ENCODE measurements at regions of chr10 and their contacts with region 1.

Region 1: DNA sequence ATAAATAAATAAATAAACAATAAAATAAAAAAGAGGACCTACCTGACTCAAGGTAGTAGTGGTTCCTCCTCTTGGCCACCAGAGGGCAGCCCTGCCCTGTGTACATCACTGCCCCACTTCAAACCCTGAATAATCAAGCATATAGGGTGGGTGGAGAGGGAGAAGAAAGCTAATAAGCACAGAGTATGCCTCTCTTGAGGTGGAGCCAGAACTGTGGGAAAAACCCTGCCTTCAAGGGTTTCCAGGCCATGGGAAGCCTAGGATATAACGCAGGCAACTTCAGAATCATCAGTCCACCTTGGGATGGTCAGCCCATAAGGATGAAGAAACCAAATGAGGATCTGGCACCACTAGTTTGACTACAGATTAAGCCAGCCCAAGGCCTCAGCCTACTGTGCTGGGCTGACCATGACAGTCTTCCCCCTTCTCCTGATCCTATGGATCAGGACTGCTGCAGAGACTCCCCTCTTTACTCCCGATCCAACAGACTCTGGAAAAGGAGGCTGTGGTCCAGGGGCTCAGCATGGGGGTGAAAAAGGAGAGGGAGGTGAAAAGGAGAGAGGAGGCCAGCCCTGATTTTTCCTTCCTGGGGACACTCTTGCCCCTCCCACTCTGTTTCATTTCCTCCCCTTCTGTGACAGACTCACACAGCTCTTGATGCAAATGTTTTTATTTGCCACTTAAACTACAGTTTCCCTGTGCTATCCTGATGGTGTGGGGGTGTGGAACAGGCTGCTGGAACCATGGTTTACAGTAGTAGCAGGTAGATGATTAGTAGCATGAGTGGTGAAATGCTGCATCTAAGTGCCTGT is 10.1 kb downstream of the AVPI1 start:
- H3K4me3 ChIP-seq: no peak overlapping the region
- H3K27ac ChIP-seq: no peak overlapping the region
- H3K4me1 ChIP-seq: no peaks in the 10 kb centered on the region
- CTCF ChIP-seq: peak; percentile 58; the same call in 1 of the 2 replicates

Region 2: GRCh38 chr10:97497572-97498075 is 179.4 kb before region 1 on chr10:
- CTCF ChIA-PET with region 1: no interaction called
- POLR2A ChIA-PET with region 1: no interaction called
- H3K4me3 ChIP-seq: peak overlapping the region; percentile 88
- H3K27ac ChIP-seq: peak overlapping the region; percentile 89
- H3K4me1 ChIP-seq: peaks cover 16% of the 10 kb centered on the region
- CTCF ChIP-seq: no peak

Region 3: GRCh38 chr10:97596101-97597062 is 80.6 kb before region 1 on chr10:
- CTCF ChIA-PET with region 1: no interaction called
- POLR2A ChIA-PET with region 1: no interaction called
- H3K4me3 ChIP-seq: no peak overlapping the region
- H3K27ac ChIP-seq: no peak overlapping the region
- H3K4me1 ChIP-seq: no peaks in the 10 kb centered on the region
- CTCF ChIP-seq: no peak

Region 4: GRCh38 chr10:97640174-97640867 is 36.7 kb before region 1 on chr10 and contains the start of gene PI4K2A:
- CTCF ChIA-PET with region 1: interaction called, 10 read pairs
- POLR2A ChIA-PET with region 1: no interaction called
- H3K4me3 ChIP-seq: peak within 1 kb of the TSS; percentile 77
- H3K27ac ChIP-seq: peak within 1 kb of the TSS; percentile 70
- H3K4me1 ChIP-seq: 0 out of 2 replicates have a peak, but pooled peaks cover 2% of the 10 kb centered on the region
- CTCF ChIP-seq: no peak

Region 5: DNA sequence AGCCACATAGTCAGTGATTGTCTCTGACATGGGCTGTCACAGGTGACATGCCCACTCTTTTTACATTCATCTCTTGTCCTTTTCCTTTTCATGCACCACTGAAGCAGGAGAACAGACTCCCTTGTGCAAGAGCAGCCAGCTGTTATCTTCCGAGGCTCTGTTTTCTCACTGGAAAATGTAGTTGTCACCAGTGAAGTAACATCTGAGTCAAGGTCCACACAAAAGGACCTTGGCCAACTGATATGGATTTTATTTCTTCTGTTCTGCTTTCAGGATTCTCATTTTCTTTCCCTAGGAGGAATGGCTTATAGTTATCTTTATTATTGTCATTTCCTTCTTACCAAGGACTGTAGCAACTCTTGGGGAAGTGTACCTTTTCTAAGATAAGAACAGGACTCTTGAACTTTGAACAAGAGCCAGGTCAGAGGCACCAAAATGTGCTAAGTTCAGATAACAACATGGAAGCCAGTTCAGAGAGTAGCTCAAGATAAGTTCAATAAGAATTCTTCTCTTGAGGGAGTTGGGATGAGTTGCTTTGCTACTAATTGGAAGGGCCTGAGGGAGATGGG is 12.6 kb before region 1 on chr10:
- CTCF ChIA-PET with region 1: interaction called, 31 read pairs
- POLR2A ChIA-PET with region 1: interaction called, 7 read pairs
- H3K4me3 ChIP-seq: no peak overlapping the region
- H3K27ac ChIP-seq: no peak overlapping the region
- H3K4me1 ChIP-seq: 0 out of 2 replicates have a peak, but pooled peaks cover 3% of the 10 kb centered on the region
- CTCF ChIP-seq: no peak

Region 6: DNA sequence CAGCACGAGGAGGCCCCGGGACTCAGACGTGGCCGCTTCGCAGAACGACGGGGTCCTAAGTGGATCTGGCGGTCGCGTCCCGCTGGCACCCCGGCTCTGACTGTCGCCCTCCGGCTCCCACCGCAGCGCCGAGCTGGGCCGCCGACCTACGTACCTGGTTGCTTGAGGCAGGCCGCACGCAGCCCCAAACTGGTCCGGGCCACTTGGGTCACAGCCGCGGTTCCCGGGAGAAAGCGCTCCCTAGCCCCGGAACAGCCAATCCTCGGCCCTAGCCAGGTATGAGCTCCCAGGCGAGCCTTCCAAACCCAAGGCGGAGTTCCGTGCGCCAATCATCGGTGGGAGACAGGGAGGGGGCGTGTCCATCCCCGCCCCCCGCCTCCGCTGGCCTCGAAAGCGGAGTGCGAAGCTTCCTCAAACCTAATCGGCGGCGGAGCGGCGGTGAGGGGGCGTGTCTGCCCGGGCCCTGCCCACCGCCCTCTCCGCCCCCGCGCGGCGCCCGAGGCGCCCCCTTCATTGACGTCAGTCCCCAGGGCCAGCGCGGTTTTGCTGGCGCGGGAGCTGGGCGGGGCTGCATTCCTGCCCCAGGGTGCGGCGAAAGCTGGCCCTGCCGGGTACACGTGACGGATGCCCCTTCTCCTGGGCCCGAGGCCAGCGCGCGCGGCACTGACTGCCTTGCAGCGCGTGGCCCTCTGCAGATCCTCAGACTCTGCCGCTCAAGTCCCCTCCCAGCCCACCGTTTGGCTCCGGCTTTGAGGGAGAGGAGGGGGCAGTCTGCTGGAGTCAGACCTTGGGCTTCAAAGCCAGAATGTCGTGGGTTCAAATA is 10.2 kb after region 1 on chr10 and contains the start of gene AVPI1:
- CTCF ChIA-PET with region 1: interaction called, 27 read pairs
- POLR2A ChIA-PET with region 1: interaction called, 10 read pairs
- H3K4me3 ChIP-seq: peak within 1 kb of the TSS; percentile 71
- H3K27ac ChIP-seq: peak within 1 kb of the TSS; percentile 63; the same call in 1 of the 2 replicates
- H3K4me1 ChIP-seq: peaks cover 10% of the 10 kb centered on the region; the same call in 1 of the 2 replicates
- CTCF ChIP-seq: no peak

Region 7: DNA sequence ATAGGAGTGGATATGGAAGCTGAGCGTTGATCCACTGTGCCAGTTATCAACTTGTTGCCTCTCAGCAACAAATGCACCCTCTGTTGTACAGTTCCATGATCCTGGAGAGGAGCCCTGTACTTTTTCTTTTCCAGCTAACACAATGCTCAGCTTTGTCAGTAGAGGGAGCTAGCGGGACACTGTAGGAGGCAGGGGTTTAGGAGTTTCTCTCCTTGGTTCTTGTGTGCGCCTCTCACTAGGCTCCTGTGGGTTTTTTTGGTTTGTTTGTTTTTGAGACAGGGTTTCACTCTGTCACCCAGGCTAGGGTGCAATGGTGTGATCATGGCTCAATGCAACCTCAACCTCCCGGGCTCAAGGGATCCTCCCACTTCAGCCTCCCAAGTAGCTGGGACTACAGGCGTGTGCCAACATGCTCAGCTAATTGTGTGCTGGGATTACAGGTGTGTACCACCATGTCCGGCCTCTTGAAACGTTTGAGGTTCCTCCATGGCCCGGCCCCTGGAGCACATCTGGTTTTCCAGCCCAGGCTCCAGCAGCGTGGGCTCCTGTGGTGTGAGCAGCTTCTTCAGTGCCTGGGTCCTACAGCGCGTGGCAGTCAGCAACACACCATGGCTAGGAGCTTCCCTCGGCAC is 24.6 kb after region 1 on chr10:
- CTCF ChIA-PET with region 1: interaction called, 67 read pairs
- POLR2A ChIA-PET with region 1: no interaction called
- H3K4me3 ChIP-seq: no peak overlapping the region
- H3K27ac ChIP-seq: no peak overlapping the region
- H3K4me1 ChIP-seq: no peaks in the 10 kb centered on the region
- CTCF ChIP-seq: peak; percentile 82

Region 8: GRCh38 chr10:97731346-97732051 is 54.5 kb after region 1 on chr10:
- CTCF ChIA-PET with region 1: interaction called, 119 read pairs
- POLR2A ChIA-PET with region 1: interaction called, 3 read pairs
- H3K4me3 ChIP-seq: no peak overlapping the region
- H3K27ac ChIP-seq: no peak overlapping the region
- H3K4me1 ChIP-seq: no peaks in the 10 kb centered on the region
- CTCF ChIP-seq: peak; percentile 82

Region 9: GRCh38 chr10:97736902-97737769 is 60.2 kb after region 1 on chr10 and contains the start of gene ZFYVE27:
- CTCF ChIA-PET with region 1: interaction called, 119 read pairs
- POLR2A ChIA-PET with region 1: interaction called, 3 read pairs
- H3K4me3 ChIP-seq: peak within 1 kb of the TSS; percentile 91
- H3K27ac ChIP-seq: peak within 1 kb of the TSS; percentile 59; the same call in 1 of the 2 replicates
- H3K4me1 ChIP-seq: 0 out of 2 replicates have a peak, but pooled peaks cover 2% of the 10 kb centered on the region
- CTCF ChIP-seq: no peak; the same call in 1 of the 2 replicates

Measured in HEK293 (cell line).